Left cardiac atrium (tissue), 4 donors: ENCODE measurements at regions of chr10 and their contacts with region 1.

Region 1: DNA sequence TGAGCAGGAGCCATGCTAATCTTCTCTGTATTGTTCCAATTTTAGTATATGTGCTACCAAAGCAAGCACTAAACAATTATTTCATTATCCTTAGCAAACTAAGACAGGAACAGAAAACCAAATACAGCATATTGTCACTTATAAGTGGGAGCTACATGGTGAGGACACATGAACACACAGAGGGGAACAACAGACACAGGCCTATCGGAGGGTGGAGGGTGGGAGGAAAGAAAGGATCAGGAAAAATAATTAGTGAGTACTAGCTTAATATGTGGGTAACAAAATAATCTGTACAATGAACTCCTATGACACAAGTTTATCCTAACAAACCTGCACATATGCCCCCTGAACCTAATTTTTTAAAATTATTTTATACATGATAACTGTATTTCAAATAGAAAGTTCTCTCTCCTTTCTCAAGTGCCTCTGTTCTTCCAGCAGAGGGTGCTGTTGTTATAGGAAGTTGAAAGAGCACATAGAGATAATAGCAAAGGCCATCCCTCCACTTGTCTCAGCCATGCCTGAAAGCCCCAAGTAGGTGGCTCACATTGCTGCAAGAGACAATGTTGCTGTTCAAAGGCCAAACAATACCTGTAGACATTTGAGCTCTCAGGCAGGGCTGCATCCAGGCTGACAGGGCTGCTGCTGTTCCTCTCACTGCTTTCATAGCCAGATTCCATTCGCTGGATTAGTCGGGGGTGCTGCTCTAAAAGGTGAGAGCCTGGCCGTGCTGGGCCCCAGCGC is 33.4 kb upstream of the PPP3CB start:
- DNase-seq: no peak
- ATAC-seq: peak; percentile 86 to 91

Region 2: DNA sequence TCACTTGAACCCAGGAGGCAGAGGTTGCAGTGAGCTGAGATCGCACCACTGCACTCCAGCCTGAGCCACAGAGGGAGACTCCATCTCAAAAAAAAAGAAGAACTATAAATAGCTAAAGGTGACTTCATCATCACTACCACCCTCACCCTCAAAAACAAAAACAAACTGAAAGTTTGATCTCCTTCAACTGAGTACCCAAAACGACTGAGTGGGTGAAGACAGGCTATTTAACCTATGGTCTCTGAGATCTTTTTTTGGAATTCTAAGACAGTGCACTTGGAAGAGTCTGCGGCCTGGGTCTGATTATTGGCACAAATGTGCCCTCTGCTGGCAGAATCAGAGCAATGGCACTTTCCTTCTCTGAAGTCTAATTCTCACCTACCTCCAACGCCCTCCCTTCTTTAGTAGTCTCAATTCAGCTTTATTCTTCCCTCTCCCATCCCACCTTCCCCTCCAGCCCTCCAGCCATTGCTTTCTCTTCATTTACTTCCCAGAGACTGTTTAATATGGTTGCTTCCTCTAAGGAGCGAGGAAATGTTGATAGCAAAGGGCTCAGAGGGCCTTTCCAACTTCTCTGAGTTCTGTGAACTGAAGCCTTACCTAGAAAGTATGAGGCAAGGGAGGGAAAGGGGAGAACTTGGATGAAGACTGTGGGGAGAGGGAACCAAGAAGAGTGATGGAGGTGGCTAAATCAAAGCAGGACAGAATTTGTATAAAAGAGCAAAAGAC is 114.9 kb after region 1 on chr10:
- intact Hi-C with region 1: loop called (anchors 1 to 2 kb)
- DNase-seq: peak; percentile 58
- ATAC-seq: peak; percentile 16 to 28

Region 3: GRCh38 chr10:73723516-73723915 is 194.3 kb after region 1 on chr10:
- intact Hi-C with region 1: loop called in 1 of 2 experiments (anchors 10 kb)
- DNase-seq: no peak
- ATAC-seq: no peak

Region 4: GRCh38 chr10:73759512-73760115 is 230.4 kb after region 1 on chr10:
- intact Hi-C with region 1: no loop called
- DNase-seq: no peak
- ATAC-seq: peak; percentile 26 to 55